PC-3 (cell line): ENCODE measurements at regions of chr20 and their contacts with region 1.

Region 1: GRCh38 chr20:56629670-56630478 is 768 bp downstream of the TFAP2C start:
- DNase-seq: peak; percentile 97
- ATAC-seq: peak; percentile 50
- H3K4me3 ChIP-seq: peak overlapping the region; percentile 84
- H3K27ac ChIP-seq: peak overlapping the region; percentile 82
- H3K4me1 ChIP-seq: peaks cover 30% of the 10 kb centered on the region
- H3K27me3 ChIP-seq: no peaks in the 10 kb centered on the region
- CTCF ChIP-seq: peak; percentile 90

Region 2: DNA sequence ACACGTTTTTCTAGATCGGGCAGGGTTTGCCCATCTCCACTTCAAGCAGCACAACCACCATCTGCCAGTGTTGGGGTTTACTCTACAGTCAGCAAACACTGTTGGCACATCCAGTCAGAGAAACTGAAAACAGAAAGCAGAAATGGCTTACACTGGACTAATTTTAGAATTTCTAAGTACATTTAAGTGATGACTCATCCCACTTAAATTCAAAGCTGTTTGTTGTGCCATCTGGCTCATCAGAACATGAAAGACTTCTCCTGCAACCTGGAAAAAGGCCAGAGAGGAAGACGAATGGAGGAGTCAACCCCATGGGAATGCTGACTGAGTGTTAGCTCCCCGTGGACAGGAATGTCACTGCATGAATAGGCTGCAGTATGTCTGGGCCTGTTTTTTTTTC is 75.0 kb before region 1 on chr20:
- CTCF ChIA-PET with region 1: interaction called, 5 read pairs
- POLR2A ChIA-PET with region 1: no interaction called
- intact Hi-C with region 1: loop called (anchors 1 kb)
- DNase-seq: peak; percentile 99
- ATAC-seq: peak; percentile 92
- H3K4me3 ChIP-seq: peak overlapping the region; percentile 8; the same call in 1 of the 2 replicates
- H3K27ac ChIP-seq: peak overlapping the region; percentile 42
- H3K4me1 ChIP-seq: peaks cover 15% of the 10 kb centered on the region
- H3K27me3 ChIP-seq: no peaks in the 10 kb centered on the region
- CTCF ChIP-seq: 0 out of 2 replicates have a peak, but pooled peaks have one; percentile 17

Region 3: DNA sequence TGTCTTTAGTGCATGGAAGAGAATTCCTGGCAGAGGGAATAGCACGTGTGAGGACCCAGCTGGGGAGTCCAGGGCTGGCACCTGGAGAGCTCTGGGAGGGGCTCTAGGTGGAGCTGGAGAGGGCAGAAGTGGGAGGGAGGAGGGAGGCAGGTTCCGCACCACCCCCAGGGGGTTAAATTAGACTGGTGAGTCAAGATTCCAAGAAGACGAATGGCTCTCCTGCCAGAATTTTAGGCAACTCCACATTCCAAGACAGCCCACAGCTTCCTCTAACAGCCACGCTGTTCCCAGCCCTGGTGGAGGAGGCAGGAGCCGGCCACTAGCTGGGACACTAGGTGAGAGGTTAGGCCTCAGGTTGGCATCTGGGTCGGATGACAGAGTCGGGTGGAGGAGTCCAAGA is 59.4 kb after region 1 on chr20:
- CTCF ChIA-PET with region 1: no interaction called
- POLR2A ChIA-PET with region 1: interaction called, 3 read pairs
- intact Hi-C with region 1: loop called (anchors 2 kb)
- DNase-seq: peak; percentile 98
- ATAC-seq: peak; percentile 90
- H3K4me3 ChIP-seq: peak overlapping the region; percentile 12; the same call in 1 of the 2 replicates
- H3K27ac ChIP-seq: peak overlapping the region; percentile 70
- H3K4me1 ChIP-seq: peaks cover 30% of the 10 kb centered on the region
- H3K27me3 ChIP-seq: no peaks in the 10 kb centered on the region
- CTCF ChIP-seq: no peak

Region 4: GRCh38 chr20:56788040-56788983 is 158.4 kb after region 1 on chr20:
- CTCF ChIA-PET with region 1: interaction called, 5 read pairs
- POLR2A ChIA-PET with region 1: interaction called, 3 read pairs
- intact Hi-C with region 1: loop called (anchors 1 kb)
- DNase-seq: peak; percentile 99
- ATAC-seq: peak; percentile 70
- H3K4me3 ChIP-seq: peak overlapping the region; percentile 46
- H3K27ac ChIP-seq: peak overlapping the region; percentile 98
- H3K4me1 ChIP-seq: peaks cover 52% of the 10 kb centered on the region
- H3K27me3 ChIP-seq: no peaks in the 10 kb centered on the region
- CTCF ChIP-seq: no peak

Region 5: DNA sequence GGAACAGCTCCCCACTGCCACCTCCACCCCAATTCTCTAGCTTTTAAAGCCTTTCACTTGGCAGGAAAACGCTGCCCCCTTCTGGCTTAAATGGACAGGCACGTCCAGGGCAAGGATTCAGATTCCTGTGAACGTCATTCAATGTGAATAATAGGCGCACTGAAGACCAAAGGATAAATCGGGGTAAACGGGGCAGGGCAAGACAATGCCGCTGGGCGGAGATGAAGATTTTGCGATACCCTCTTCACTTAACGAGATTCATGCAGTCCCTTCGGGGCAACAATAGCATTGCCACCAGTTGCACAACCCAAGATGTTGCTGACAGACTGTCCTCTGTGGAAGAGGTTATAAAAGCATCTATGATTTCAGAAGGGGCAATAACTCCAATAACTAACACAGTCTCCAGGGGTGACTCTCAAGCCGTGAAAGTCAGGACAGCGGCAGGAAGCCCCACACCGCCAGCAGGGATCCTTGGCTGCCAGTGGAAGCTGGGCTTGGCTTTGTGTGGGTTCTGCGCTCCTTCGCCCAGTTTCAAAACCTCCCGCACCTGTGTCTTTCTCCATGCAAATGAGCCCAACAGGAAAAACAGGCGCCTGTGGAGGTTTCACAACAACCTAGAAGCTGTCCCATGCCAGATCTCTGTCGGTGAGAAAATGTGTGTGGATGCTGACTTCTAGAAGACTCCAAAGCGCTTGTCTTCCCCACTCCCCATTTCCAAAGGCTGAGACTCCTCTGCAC is 344.8 kb after region 1 on chr20:
- CTCF ChIA-PET with region 1: interaction called, 19 read pairs
- POLR2A ChIA-PET with region 1: no interaction called
- intact Hi-C with region 1: loop called (anchors 1 kb)
- DNase-seq: peak; percentile 92
- ATAC-seq: peak; percentile 90
- H3K4me3 ChIP-seq: peak overlapping the region; percentile 48
- H3K27ac ChIP-seq: no peak overlapping the region
- H3K4me1 ChIP-seq: peaks cover 8% of the 10 kb centered on the region; the same call in 1 of the 2 replicates
- H3K27me3 ChIP-seq: no peaks in the 10 kb centered on the region
- CTCF ChIP-seq: peak; percentile 98